ENCODE measurements at regions of chr17 and their contacts with region 1.

Region 1: GRCh38 chr17:73172252-73172651 is 7.4 kb downstream of the SSTR2 start:
- DNase-seq: no peak
- ATAC-seq: no peak
- H3K4me3 ChIP-seq: no peak overlapping the region
- H3K27ac ChIP-seq: no peak overlapping the region
- H3K4me1 ChIP-seq: no peaks in the 10 kb centered on the region
- H3K27me3 ChIP-seq: peaks cover 5 to 10% (median 9%) of the 10 kb centered on the region in 3 donors
- CTCF ChIP-seq: no peak
- POLR2A ChIP-seq: no peak

Region 2: DNA sequence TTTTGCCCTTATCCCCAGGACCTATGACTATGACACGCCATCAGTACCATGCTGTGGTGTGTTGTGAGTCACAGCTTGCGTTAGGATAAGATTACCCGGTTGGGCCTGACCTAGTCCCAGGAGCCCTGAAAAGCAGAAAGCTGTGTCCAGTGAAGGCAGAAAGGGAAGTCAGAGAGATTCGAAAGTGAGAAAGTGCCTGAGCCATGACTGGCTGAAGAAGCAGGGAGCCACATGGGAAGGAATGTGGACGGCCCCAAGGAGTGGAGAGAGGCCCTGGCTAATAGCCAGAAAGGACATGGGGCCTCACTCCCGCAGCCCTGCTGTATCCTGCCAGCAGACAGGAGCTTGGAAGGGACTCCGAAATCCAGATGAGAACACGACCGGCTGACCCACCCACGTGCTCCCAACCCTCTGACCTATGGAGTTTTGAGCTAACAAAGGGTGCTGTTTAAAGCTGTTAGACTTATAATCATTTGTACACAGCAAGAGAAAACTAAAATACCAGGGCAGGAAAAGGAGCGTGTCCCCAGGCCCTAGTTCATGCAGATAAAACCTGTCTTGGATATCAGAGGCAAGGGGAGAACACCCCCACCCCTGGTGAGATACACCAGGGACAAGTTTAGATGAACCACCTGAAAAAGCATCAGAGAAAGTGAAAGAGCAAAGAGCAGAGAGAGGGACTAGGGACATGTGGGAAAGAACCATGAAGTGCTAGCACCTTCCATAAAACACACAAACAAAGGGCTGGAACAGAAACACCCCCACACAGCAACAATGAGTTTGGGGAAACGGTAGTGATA is 195.1 kb before region 1 on chr17:
- in situ Hi-C with region 1: no loop called
- intact Hi-C with region 1: no loop called
- DNase-seq: peak; percentile 4 to 23
- ATAC-seq: peak; percentile 36 to 60
- H3K4me3 ChIP-seq: no peak overlapping the region
- H3K27ac ChIP-seq: peak overlapping the region in 1 of 4 donors; percentile 26
- H3K4me1 ChIP-seq: peaks cover 0 to 17% of the 10 kb centered on the region in 2 donors
- H3K27me3 ChIP-seq: no peaks in the 10 kb centered on the region
- CTCF ChIP-seq: no peak
- POLR2A ChIP-seq: no peak

Region 3: GRCh38 chr17:73089322-73090317 is 82.6 kb before region 1 on chr17:
- in situ Hi-C with region 1: no loop called
- intact Hi-C with region 1: loop called (anchors 10 kb)
- DNase-seq: no peak
- ATAC-seq: no peak
- H3K4me3 ChIP-seq: no peak overlapping the region
- H3K27ac ChIP-seq: no peak overlapping the region
- H3K4me1 ChIP-seq: peaks cover 10% of the 10 kb centered on the region in 2 donors
- H3K27me3 ChIP-seq: no peaks in the 10 kb centered on the region
- CTCF ChIP-seq: no peak
- POLR2A ChIP-seq: no peak

Region 4: DNA sequence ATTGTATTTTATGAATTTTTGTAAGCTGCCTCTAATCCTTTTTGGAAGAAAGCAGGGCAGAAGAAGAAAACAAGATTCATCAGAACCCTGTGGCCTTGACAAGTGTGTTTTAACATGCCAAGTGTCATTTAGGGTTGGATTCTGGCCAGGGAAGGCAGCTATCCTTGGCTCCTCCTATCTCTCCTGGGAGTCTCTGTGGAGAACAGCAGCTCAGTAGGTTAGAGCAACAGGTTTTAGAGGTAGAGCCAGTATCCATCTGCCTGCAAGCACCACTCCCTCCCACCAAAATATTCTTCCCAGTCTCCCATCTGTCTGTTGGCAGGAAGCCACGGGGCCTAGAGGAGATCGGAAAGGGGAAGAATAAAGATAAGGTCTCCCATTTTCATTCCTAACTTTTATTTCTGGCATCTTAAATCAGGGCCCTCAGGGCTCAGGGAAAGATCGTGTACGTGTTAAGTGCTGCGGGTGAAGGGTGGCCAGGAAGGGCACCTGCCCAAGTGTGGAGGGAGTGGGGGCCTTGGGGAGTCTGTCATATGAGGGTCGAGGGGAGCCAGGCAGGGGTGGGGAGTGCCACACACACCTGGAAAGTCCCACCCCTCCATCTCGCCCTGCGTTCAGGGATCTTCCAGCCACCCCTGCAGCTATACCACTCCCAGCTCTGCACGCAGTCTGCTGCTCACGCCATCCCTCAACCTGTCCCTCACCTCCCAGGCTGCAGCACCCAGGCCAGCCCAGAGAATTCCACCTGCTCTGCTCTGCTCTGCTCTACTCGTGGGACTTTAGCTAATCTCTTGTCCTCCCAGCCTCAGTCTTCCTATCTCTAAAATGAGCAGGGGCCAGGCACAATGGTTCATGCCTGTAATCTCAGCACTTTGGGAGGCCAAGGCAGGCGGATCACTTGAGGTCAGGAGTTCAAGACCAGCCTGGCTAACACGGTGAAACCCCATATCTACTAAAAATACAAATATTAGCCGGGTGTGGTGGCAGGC is 106.5 kb after region 1 on chr17:
- in situ Hi-C with region 1: no loop called
- intact Hi-C with region 1: no loop called
- DNase-seq: peak in 1 of 2 donors; percentile 51
- ATAC-seq: peak; percentile 69 to 73
- H3K4me3 ChIP-seq: no peak overlapping the region
- H3K27ac ChIP-seq: peak overlapping the region; percentile 60 to 80 (median 68)
- H3K4me1 ChIP-seq: peaks cover 22 to 27% of the 10 kb centered on the region in 2 donors
- H3K27me3 ChIP-seq: no peaks in the 10 kb centered on the region
- CTCF ChIP-seq: no peak
- POLR2A ChIP-seq: no peak

Measured in gastrocnemius medialis (tissue), 4 donors.